MCF 10A (cell line): ENCODE measurements at regions of chr12 and their contacts with region 1.

Region 1: GRCh38 chr12:29782285-29782870 is 1.4 kb downstream of the TMTC1 start:
- DNase-seq: peak; percentile 86
- H3K4me3 Mint-ChIP-seq: peak overlapping the region; percentile 91
- H3K27ac Mint-ChIP-seq: peak overlapping the region; percentile 88
- H3K4me1 Mint-ChIP-seq: peaks cover 19% of the 10 kb centered on the region
- H3K27me3 Mint-ChIP-seq: no peaks in the 10 kb centered on the region
- CTCF ChIP-seq: no peak

Region 2: DNA sequence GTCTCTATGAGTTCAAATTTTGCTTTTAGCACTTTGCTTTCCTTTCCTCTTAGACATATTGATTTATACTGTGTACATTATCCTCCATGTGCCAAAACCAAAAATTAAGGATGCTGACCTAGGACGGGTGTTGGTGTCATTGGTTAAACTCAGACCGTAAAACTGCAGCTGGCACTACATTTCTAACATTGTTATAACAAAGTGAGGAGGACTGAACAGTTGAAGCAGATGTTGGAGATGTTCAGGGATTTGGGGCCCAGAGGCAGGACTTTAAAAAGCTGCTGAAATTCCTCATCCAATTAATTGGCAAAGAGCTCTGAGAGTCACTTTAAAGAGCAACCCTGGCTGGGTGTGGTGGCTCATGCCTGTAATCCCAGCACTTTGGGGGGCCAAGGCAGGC is 71.0 kb before region 1 on chr12:
- CTCF ChIA-PET with region 1: no interaction called
- POLR2A ChIA-PET with region 1: interaction called, 3 read pairs
- intact Hi-C with region 1: loop called (anchors 2 kb)
- DNase-seq: no peak
- H3K4me3 Mint-ChIP-seq: no peak overlapping the region
- H3K27ac Mint-ChIP-seq: peak overlapping the region; percentile 99
- H3K4me1 Mint-ChIP-seq: peaks cover 62% of the 10 kb centered on the region
- H3K27me3 Mint-ChIP-seq: no peaks in the 10 kb centered on the region
- CTCF ChIP-seq: no peak

Region 3: GRCh38 chr12:29769162-29769858 is 13.1 kb before region 1 on chr12:
- CTCF ChIA-PET with region 1: interaction called, 10 read pairs
- POLR2A ChIA-PET with region 1: interaction called, 15 read pairs
- intact Hi-C with region 1: no loop called
- DNase-seq: peak; percentile 91
- H3K4me3 Mint-ChIP-seq: no peak overlapping the region
- H3K27ac Mint-ChIP-seq: peak overlapping the region; percentile 63
- H3K4me1 Mint-ChIP-seq: peaks cover 45% of the 10 kb centered on the region
- H3K27me3 Mint-ChIP-seq: no peaks in the 10 kb centered on the region
- CTCF ChIP-seq: no peak

Region 4: GRCh38 chr12:29844667-29845066 is 62.3 kb after region 1 on chr12:
- CTCF ChIA-PET with region 1: no interaction called
- POLR2A ChIA-PET with region 1: interaction called, 3 read pairs
- intact Hi-C with region 1: loop called (anchors 10 kb)
- DNase-seq: peak; percentile 35
- H3K4me3 Mint-ChIP-seq: no peak overlapping the region
- H3K27ac Mint-ChIP-seq: no peak overlapping the region
- H3K4me1 Mint-ChIP-seq: no peaks in the 10 kb centered on the region
- H3K27me3 Mint-ChIP-seq: no peaks in the 10 kb centered on the region
- CTCF ChIP-seq: peak; percentile 16

Region 5: DNA sequence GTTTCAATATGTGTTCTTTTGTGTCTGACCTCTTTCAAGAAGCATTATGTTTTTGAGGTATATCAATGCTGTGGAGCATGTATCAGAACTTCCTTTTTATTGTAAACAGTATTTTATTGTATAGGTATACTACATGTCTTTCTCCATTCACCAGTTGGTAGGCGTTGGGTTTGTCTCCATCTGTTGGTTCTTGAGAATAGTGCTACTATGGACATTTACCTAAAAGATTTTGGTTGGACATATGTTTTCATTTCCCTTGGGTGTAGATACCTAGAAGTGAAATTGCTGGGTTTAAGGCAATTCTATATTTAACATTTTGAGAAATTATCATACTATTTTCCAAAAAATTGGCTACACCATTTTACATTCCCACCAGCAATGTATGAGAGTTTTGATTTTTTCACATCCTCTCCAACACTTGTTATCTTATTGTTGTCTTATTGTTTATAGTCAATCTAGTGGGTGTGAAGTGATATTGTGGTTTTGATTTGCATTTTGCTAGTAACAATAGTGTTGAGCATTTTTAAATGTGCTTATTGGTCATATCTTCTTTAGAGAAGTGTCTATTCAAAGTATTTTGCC is 504.1 kb after region 1 on chr12:
- CTCF ChIA-PET with region 1: interaction called, 3 read pairs
- POLR2A ChIA-PET with region 1: no interaction called
- intact Hi-C with region 1: loop called (anchors 5 kb)
- DNase-seq: peak; percentile 59
- H3K4me3 Mint-ChIP-seq: no peak overlapping the region
- H3K27ac Mint-ChIP-seq: no peak overlapping the region
- H3K4me1 Mint-ChIP-seq: no peaks in the 10 kb centered on the region
- H3K27me3 Mint-ChIP-seq: peaks cover 19% of the 10 kb centered on the region
- CTCF ChIP-seq: peak; percentile 63